PC-3 (cell line): ENCODE measurements at regions of chr6 and their contacts with region 1.

Region 1: DNA sequence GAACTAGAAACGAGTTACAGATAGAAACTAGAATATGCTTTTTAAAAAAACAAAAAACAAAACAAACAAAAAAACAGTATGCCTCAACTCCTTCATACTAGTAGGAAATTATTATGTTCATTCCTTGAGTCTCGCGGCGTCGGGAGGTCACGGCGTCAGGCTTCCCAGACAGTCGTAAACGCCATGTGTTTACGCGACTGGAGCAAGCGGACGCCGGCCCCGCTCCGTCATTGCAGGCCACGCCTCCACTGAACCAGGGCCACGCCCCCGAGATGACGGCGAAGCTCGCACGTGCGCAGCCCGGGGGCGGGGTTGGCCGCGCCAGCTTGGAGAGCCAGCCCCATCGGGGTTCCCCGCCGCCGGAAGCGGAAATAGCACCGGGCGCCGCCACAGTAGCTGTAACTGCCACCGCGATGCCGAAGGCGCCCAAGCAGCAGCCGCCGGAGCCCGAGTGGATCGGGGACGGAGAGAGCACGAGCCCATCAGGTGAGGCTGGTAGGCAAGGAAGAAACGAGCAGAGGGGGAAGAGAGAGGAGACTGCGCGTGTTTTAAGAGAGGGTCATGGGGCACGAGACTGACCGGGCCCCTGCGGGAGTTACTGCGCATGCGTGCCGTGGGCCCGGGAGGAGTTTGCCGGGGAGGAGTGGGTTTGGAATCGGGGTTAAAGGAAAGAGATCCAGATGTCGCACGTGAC is at the start of gene ABCF1:
- DNase-seq: peak; percentile 99
- ATAC-seq: peak; percentile 92
- H3K4me3 ChIP-seq: peak within 1 kb of the TSS; percentile 82
- H3K27ac ChIP-seq: peak within 1 kb of the TSS; percentile 75
- H3K4me1 ChIP-seq: peaks cover 32% of the 10 kb centered on the region
- H3K27me3 ChIP-seq: no peaks in the 10 kb centered on the region
- CTCF ChIP-seq: no peak
- total RNA-seq, gene ABCF1: 67.3 and 77.3 TPM in 2 replicates

Region 2: GRCh38 chr6:30411515-30412207 is 159.6 kb before region 1 on chr6:
- CTCF ChIA-PET with region 1: no interaction called
- POLR2A ChIA-PET with region 1: no interaction called
- intact Hi-C with region 1: no loop called
- DNase-seq: peak; percentile 72
- ATAC-seq: peak; percentile 72
- H3K4me3 ChIP-seq: no peak overlapping the region
- H3K27ac ChIP-seq: no peak overlapping the region
- H3K4me1 ChIP-seq: no peaks in the 10 kb centered on the region
- H3K27me3 ChIP-seq: peaks cover 40% of the 10 kb centered on the region
- CTCF ChIP-seq: peak; percentile 56

Region 3: GRCh38 chr6:30489081-30490025 is 81.9 kb before region 1 on chr6 and contains the start of gene HLA-E:
- CTCF ChIA-PET with region 1: no interaction called
- POLR2A ChIA-PET with region 1: no interaction called
- intact Hi-C with region 1: no loop called
- DNase-seq: peak; percentile 99
- ATAC-seq: peak; percentile 91
- H3K4me3 ChIP-seq: peak within 1 kb of the TSS; percentile 90
- H3K27ac ChIP-seq: peak within 1 kb of the TSS; percentile 38
- H3K4me1 ChIP-seq: peaks cover 8% of the 10 kb centered on the region
- H3K27me3 ChIP-seq: no peaks in the 10 kb centered on the region
- CTCF ChIP-seq: no peak
- total RNA-seq, gene HLA-E: 131 and 161 TPM in 2 replicates

Region 4: GRCh38 chr6:30635834-30636233 is 64.6 kb after region 1 on chr6:
- CTCF ChIA-PET with region 1: no interaction called
- POLR2A ChIA-PET with region 1: interaction called, 17 read pairs
- intact Hi-C with region 1: no loop called
- DNase-seq: no peak
- ATAC-seq: no peak
- H3K4me3 ChIP-seq: no peak overlapping the region
- H3K27ac ChIP-seq: no peak overlapping the region
- H3K4me1 ChIP-seq: peaks cover 7% of the 10 kb centered on the region; the same call in 1 of the 2 replicates
- H3K27me3 ChIP-seq: no peaks in the 10 kb centered on the region
- CTCF ChIP-seq: no peak

Region 5: DNA sequence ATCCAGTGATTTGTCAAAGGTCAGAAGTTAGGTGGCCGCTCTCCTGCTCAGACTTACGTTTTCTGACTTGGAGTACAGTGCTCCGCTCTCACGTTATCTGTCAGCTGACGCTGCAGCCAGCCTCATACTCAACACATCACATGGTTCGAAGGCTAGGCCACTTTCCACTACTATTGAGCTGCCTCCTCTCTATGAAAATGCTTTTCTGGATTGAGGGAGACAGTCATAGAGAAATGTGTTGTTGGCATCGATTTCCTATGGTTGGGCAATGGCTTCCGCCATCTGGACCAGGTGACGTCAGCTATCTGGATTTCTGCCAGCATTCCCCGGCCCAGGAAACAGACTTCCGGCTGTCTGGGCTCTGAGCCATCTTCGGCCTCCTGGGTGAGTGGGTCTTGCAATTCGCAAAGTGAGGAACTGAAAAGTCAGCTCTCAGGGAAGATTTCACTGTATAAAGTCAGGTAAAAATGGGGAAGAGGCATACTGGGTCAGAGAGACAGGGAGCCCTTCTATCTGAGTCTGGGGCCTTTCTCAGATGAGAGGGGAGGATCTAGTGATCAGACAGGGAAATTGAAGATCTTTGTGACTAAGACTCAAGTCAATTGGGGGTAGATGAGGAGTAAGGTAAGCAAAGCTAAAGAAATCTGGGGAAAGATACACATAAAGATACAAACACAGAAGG is 210.7 kb after region 1 on chr6:
- CTCF ChIA-PET with region 1: no interaction called
- POLR2A ChIA-PET with region 1: no interaction called
- intact Hi-C with region 1: no loop called
- DNase-seq: peak; percentile 99
- ATAC-seq: peak; percentile 64
- H3K4me3 ChIP-seq: peak overlapping the region; percentile 43
- H3K27ac ChIP-seq: peak overlapping the region; percentile 96
- H3K4me1 ChIP-seq: peaks cover 52% of the 10 kb centered on the region
- H3K27me3 ChIP-seq: no peaks in the 10 kb centered on the region
- CTCF ChIP-seq: no peak